ENCODE measurements at regions of chr12 and their contacts with region 1.

Region 1: GRCh38 chr12:89949457-89950195 is 241.0 kb upstream of the ATP2B1 start:
- DNase-seq: peak; percentile 87 to 94 (median 90)
- H3K4me3 ChIP-seq: no peak overlapping the region
- H3K4me3 Mint-ChIP-seq: peak overlapping the region; percentile 11 to 77 (median 59)
- H3K27ac ChIP-seq: peak overlapping the region; percentile 83
- H3K27ac Mint-ChIP-seq: peak overlapping the region; percentile 74 to 98 (median 93)
- H3K4me1 ChIP-seq: peaks cover 53% of the 10 kb centered on the region
- H3K4me1 Mint-ChIP-seq: peaks cover 49 to 64% (median 58%) of the 10 kb centered on the region in 4 donors
- H3K27me3 ChIP-seq: no peaks in the 10 kb centered on the region
- H3K27me3 Mint-ChIP-seq: no peaks in the 10 kb centered on the region

Region 2: DNA sequence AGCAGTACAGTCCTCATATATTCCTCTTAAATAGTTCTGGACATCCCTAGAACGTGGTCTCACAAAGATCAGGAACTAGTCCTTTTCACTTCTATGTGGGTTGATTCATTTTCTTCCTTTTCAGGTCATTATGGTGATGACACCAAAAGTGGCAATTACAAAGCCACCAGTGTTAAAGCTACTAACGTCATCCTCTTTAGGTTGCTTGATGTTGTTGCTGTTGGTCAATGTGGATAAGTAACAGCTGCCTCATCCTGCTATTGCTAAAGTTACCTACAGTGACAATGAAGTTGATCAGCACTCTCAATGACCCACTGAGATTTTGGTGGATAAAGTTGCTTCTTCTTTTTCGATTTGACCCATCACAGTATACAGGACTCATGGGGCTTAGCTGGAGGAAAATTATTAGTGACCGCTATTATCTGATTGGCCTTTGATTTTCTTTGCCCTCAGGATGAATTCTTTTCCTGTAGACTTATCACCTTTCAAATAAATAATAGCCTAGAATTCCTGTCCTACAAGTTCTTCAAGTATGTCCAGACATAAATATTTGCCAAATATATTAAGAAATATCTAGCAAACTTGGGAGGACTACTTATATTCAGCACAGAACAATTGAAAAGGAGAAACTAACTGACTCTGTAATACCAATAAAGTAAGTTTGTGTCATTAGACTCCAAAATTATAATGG is 187.0 kb before region 1 on chr12:
- CTCF ChIA-PET with region 1: no interaction called
- POLR2A ChIA-PET with region 1: interaction called, 4 read pairs
- intact Hi-C with region 1: loop called (anchors 5 kb)
- DNase-seq: no peak
- H3K4me3 ChIP-seq: no peak overlapping the region
- H3K4me3 Mint-ChIP-seq: peak overlapping the region in 1 of 8 donors; percentile 15
- H3K27ac ChIP-seq: no peak overlapping the region
- H3K27ac Mint-ChIP-seq: peak overlapping the region in 3 of 7 donors; percentile 9 to 75 (median 29)
- H3K4me1 ChIP-seq: peaks cover 50% of the 10 kb centered on the region
- H3K4me1 Mint-ChIP-seq: peaks cover 43 to 90% (median 59%) of the 10 kb centered on the region in 4 donors
- H3K27me3 ChIP-seq: no peaks in the 10 kb centered on the region
- H3K27me3 Mint-ChIP-seq: no peaks in the 10 kb centered on the region

Region 3: GRCh38 chr12:89960011-89960507 is 10.4 kb after region 1 on chr12:
- CTCF ChIA-PET with region 1: no interaction called
- POLR2A ChIA-PET with region 1: interaction called, 10 read pairs
- intact Hi-C with region 1: no loop called
- DNase-seq: peak in 1 of 5 donors; percentile 61
- H3K4me3 ChIP-seq: no peak overlapping the region
- H3K4me3 Mint-ChIP-seq: no peak overlapping the region
- H3K27ac ChIP-seq: no peak overlapping the region
- H3K27ac Mint-ChIP-seq: peak overlapping the region in 2 of 7 donors; percentile 46 to 47
- H3K4me1 ChIP-seq: peaks cover 12% of the 10 kb centered on the region
- H3K4me1 Mint-ChIP-seq: peaks cover 15 to 25% (median 22%) of the 10 kb centered on the region in 4 donors
- H3K27me3 ChIP-seq: no peaks in the 10 kb centered on the region
- H3K27me3 Mint-ChIP-seq: no peaks in the 10 kb centered on the region

Region 4: GRCh38 chr12:89992668-89993451 is 43.2 kb after region 1 on chr12:
- CTCF ChIA-PET with region 1: interaction called, 4 read pairs
- POLR2A ChIA-PET with region 1: no interaction called
- intact Hi-C with region 1: loop called (anchors 5 kb)
- DNase-seq: peak in 3 of 5 donors; percentile 5 to 25 (median 18)
- H3K4me3 ChIP-seq: no peak overlapping the region
- H3K4me3 Mint-ChIP-seq: peak overlapping the region in 6 of 8 donors; percentile 2 to 60 (median 18)
- H3K27ac ChIP-seq: no peak overlapping the region
- H3K27ac Mint-ChIP-seq: peak overlapping the region in 4 of 7 donors; percentile 9 to 86 (median 49)
- H3K4me1 ChIP-seq: peaks cover 24% of the 10 kb centered on the region
- H3K4me1 Mint-ChIP-seq: peaks cover 32 to 46% (median 37%) of the 10 kb centered on the region in 4 donors
- H3K27me3 ChIP-seq: no peaks in the 10 kb centered on the region
- H3K27me3 Mint-ChIP-seq: no peaks in the 10 kb centered on the region

Region 5: GRCh38 chr12:90124289-90124688 is 174.7 kb after region 1 on chr12:
- CTCF ChIA-PET with region 1: no interaction called
- POLR2A ChIA-PET with region 1: no interaction called
- intact Hi-C with region 1: no loop called
- DNase-seq: no peak
- H3K4me3 ChIP-seq: no peak overlapping the region
- H3K4me3 Mint-ChIP-seq: no peak overlapping the region
- H3K27ac ChIP-seq: no peak overlapping the region
- H3K27ac Mint-ChIP-seq: no peak overlapping the region
- H3K4me1 ChIP-seq: no peaks in the 10 kb centered on the region
- H3K4me1 Mint-ChIP-seq: no peaks in the 10 kb centered on the region
- H3K27me3 ChIP-seq: no peaks in the 10 kb centered on the region
- H3K27me3 Mint-ChIP-seq: peaks cover 2 to 14% of the 10 kb centered on the region in 2 donors

Measured in CD4-positive, alpha-beta memory T cell (primary cell).